ENCODE measurements at regions of chr3 and their contacts with region 1.

Region 1: DNA sequence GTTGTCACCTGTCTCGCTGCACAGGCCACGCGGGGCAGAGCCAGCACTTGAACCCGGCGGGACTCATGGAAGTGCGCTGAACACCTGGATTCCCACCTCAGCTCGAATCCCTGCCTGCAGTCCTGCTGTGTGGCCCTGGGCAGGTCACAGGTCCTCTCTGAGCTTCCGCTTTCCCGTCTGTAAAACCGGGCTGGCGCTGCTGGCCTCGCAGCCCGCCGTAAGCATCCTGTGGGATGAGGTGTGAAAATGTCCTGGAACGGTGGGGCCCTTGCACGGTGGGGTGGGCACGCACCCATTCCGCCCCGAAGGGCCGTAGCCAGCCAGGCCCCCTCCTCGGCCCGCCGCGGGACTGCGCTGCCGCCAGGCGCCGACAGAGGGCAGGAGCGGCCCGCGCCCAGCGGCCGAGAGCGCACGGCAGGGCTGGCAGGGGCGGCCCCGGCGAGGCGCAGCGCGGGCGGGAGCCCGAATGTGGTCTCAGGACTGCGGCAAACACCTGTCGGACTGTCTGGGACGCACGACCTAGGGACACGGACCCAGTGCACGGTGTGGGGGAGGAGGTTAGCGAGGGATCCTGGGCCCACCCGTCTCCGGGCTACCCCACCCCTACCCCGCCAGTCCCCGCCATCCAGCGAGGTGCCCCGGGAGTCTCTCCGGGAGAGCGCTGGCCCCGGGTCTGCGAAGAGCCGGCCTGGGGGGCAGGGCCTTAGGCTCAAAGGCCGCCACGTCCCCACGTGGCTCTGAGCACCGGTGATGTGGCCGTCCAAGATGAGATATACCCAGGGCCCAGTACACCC is 40.4 kb downstream of the DNAJB8 start:
- DNase-seq: peak in 4 of 10 donors; percentile 15 to 58 (median 28)

Region 2: GRCh38 chr3:128236657-128237056 is 189.7 kb before region 1 on chr3:
- intact Hi-C with region 1: loop called (anchors 10 kb)
- DNase-seq: no peak

Region 3: DNA sequence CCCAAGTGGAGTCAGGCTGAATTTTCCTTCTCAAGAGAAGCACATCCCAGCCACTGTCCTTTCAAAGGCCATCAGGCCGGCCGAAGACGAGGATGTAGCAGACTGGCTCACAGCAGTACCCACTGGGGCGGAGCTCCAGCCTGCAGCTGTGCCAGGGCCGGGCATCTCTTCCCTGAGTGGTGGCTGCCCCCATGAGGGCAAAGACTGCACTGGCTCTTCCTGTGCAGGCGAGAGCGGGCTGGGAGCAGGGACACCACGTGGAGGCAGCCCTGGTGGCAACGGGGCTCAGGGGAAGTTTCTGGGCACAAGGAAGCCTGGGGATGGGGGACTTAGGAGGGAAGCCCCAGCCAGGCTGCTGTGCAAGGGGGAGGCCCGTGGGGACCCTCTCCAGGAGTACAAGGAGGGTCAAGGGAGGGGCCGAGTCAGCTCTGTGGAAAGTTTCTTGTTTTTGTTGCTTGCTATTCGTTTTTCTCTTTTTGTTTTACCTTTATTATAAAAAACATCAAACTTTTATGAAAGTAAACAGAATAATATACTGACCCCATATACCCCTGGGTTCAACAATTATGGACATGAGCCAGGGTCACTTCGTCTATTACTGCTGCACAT is 158.2 kb after region 1 on chr3:
- intact Hi-C with region 1: loop called (anchors 1 kb)
- DNase-seq: peak; percentile 20 to 96 (median 77)

Region 4: DNA sequence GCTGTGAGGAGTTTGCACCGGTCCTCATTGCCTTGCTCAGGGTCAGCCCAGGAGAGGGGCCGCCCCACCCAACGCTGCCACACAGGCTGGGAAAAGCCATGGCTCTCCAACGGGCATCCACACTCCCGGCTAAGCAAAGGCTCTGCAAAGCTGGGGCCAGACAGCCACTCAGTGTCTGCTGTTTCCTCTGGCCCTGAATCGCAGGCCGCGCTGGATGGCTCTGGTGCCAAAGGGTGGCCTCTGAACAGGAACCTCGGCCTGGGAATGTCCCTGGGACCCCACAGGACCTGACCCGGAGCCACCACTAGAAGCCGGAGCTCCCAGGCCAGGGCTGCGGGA is 181.4 kb after region 1 on chr3:
- intact Hi-C with region 1: loop called (anchors 2 kb)
- DNase-seq: peak in 3 of 10 donors; percentile 14 to 87 (median 16)

Region 5: GRCh38 chr3:128650096-128651050 is 224.0 kb after region 1 on chr3 and contains the start of gene RPN1:
- intact Hi-C with region 1: no loop called
- DNase-seq: peak; percentile 91 to 99 (median 95)

Region 6: GRCh38 chr3:128679338-128679737 is 253.0 kb after region 1 on chr3:
- intact Hi-C with region 1: no loop called
- DNase-seq: peak in 1 of 10 donors; percentile 2

Measured in posterior cingulate gyrus (tissue), 11 donors.